PC-3 (cell line): ENCODE measurements at regions of chr12 and their contacts with region 1.

Region 1: DNA sequence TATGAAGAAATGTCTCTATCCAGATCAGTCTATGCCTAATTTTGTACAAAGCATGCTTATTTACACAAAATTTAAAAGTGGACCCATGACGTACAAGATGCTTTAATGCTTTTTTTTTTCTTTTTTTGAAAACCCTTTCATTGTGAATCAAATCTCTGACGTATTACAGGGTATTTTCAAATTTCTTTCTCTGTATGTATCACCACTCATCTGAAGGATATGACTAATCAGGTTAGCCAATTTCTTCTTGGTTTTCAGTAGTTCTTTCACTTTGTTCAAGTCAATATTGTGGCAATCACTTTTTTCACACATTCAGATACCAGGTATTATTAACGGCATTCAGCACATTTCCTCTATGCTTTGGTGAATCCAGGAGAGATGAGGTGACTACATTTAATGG is 685.3 kb downstream of the TRHDE start:
- DNase-seq: peak; percentile 25
- ATAC-seq: no peak
- H3K4me3 ChIP-seq: no peak overlapping the region
- H3K27ac ChIP-seq: no peak overlapping the region
- H3K4me1 ChIP-seq: no peaks in the 10 kb centered on the region
- H3K27me3 ChIP-seq: no peaks in the 10 kb centered on the region
- CTCF ChIP-seq: no peak

Region 2: DNA sequence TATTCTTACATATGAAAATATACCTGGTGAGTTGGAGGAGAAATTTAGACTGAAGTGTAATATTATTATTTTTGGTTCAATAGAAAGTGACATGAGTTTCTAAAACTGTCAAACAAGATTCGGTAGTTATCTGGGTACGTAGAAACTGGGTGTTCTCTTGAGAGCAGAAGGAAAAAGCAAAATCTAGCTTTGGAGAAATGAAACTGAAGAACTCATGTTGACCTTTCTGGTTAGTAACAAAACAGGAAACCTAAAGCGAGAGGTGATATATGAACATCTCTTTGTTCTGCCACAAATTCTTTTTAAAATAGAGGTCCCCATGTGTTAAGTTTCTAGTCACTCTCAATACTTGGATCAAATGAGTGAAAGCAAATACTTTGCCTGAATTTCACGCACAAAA is 283.6 kb before region 1 on chr12:
- CTCF ChIA-PET with region 1: no interaction called
- POLR2A ChIA-PET with region 1: no interaction called
- intact Hi-C with region 1: loop called (anchors 10 kb)
- DNase-seq: no peak
- ATAC-seq: no peak
- H3K4me3 ChIP-seq: no peak overlapping the region
- H3K27ac ChIP-seq: no peak overlapping the region
- H3K4me1 ChIP-seq: no peaks in the 10 kb centered on the region
- H3K27me3 ChIP-seq: no peaks in the 10 kb centered on the region
- CTCF ChIP-seq: no peak

Region 3: DNA sequence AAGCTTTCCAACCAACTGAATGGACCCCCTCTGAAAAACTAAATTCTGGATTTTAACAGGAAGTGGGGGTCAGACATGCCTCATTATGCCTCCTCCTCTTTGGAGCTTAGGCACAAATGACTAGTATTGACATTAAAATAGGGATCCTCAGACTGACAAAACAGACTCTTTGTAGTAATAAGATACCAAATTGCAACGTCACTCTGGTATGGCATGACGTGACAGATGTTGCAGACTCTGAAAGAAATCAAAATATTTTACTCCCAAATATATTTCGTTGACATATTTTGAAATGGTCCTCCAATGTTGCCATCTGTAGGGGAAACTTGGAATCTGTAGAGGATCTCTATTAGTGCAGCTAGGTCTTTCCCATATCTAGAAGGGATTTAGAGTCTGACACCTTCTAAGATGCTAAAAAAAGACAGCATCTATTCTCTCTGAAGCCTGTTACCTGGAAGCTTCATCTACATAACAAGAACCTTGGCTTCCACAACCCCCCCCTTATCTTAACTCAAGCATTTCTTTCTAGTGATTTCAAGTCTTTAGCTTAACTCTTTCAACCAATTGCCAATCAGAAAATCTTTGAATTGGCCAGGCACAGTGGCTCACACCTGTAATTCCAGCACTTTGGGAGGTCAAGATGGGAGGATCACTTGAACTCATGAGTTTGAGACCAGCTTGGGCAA is 142.2 kb before region 1 on chr12:
- CTCF ChIA-PET with region 1: no interaction called
- POLR2A ChIA-PET with region 1: no interaction called
- intact Hi-C with region 1: no loop called
- DNase-seq: no peak
- ATAC-seq: no peak
- H3K4me3 ChIP-seq: no peak overlapping the region
- H3K27ac ChIP-seq: no peak overlapping the region
- H3K4me1 ChIP-seq: no peaks in the 10 kb centered on the region
- H3K27me3 ChIP-seq: no peaks in the 10 kb centered on the region
- CTCF ChIP-seq: no peak

Region 4: DNA sequence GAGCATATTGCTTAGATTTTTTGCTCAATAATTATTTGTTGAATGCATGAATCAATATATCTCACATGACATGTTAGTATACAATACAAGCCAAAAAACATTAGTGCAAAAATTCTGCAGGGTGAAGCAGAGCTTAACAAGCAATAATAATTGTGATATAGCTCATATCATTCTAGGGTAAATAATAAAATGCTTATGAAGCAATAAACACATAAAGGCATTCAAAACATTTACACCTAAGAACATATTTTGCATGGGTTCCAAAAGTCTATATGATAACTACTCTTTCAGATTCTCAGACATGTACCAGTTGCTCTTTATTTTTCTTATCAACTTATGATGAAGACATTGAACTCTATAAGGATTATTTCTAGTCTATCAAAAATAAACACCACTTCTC is 200.9 kb after region 1 on chr12:
- CTCF ChIA-PET with region 1: no interaction called
- POLR2A ChIA-PET with region 1: no interaction called
- intact Hi-C with region 1: no loop called
- DNase-seq: no peak
- ATAC-seq: no peak
- H3K4me3 ChIP-seq: no peak overlapping the region
- H3K27ac ChIP-seq: no peak overlapping the region
- H3K4me1 ChIP-seq: no peaks in the 10 kb centered on the region
- H3K27me3 ChIP-seq: no peaks in the 10 kb centered on the region
- CTCF ChIP-seq: no peak